ENCODE measurements at regions of chr12 and their contacts with region 1.

Region 1: GRCh38 chr12:32365473-32366064 is 33.8 kb upstream of the FGD4 start:
- DNase-seq: peak; percentile 33
- H3K4me3 ChIP-seq: no peak overlapping the region
- CTCF ChIP-seq: peak; percentile 75

Region 2: GRCh38 chr12:32353540-32353939 is 12.0 kb before region 1 on chr12:
- CTCF ChIA-PET with region 1: interaction called, 14 read pairs
- POLR2A ChIA-PET with region 1: no interaction called
- DNase-seq: no peak
- H3K4me3 ChIP-seq: no peak overlapping the region
- CTCF ChIP-seq: no peak

Region 3: GRCh38 chr12:32377344-32378055 is 11.9 kb after region 1 on chr12:
- CTCF ChIA-PET with region 1: interaction called, 16 read pairs
- POLR2A ChIA-PET with region 1: no interaction called
- DNase-seq: no peak
- H3K4me3 ChIP-seq: no peak overlapping the region
- CTCF ChIP-seq: no peak

Region 4: GRCh38 chr12:32455607-32456071 is 90.1 kb after region 1 on chr12:
- CTCF ChIA-PET with region 1: interaction called, 12 read pairs
- POLR2A ChIA-PET with region 1: no interaction called
- DNase-seq: peak; percentile 52
- H3K4me3 ChIP-seq: peak overlapping the region; percentile 45
- CTCF ChIP-seq: peak; percentile 26

Region 5: DNA sequence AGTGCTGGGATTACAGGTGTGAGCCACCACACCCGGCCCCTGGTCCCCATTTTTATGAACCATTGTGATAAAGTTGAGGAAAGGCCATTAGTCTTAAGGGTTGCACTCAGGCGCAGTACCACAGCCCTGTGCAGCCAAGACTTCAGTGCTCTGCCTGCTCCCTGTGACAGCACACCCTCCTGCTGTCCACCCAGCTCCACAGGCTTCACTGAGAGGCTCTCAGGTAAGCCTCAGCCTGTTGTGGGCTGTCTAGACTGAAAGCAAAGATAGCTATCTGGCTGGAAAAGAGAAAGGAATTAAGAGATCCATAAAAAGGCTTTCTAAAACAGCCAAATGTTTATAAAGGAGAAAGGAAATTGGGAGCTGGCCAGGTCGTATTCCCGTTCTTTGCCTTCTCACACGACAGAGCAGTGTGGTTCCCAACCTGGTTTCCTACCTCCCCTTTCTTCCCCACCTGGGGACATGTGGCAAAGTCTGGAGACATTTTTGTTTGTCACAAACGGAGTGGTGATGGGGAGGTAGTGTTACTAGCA is 294.4 kb after region 1 on chr12:
- CTCF ChIA-PET with region 1: interaction called, 16 read pairs
- POLR2A ChIA-PET with region 1: no interaction called
- DNase-seq: no peak
- H3K4me3 ChIP-seq: no peak overlapping the region
- CTCF ChIP-seq: no peak

Region 6: GRCh38 chr12:32671930-32672780 is 306.6 kb after region 1 on chr12:
- CTCF ChIA-PET with region 1: interaction called, 80 read pairs
- POLR2A ChIA-PET with region 1: no interaction called
- DNase-seq: peak; percentile 33
- H3K4me3 ChIP-seq: no peak overlapping the region
- CTCF ChIP-seq: peak; percentile 57

Region 7: GRCh38 chr12:32679091-32679919 is 313.7 kb after region 1 on chr12 and contains the start of gene DNM1L:
- CTCF ChIA-PET with region 1: interaction called, 10 read pairs
- POLR2A ChIA-PET with region 1: no interaction called
- DNase-seq: peak; percentile 80
- H3K4me3 ChIP-seq: peak within 1 kb of the TSS; percentile 88
- CTCF ChIP-seq: peak; percentile 26

Measured in AG04449 (cell line).